ENCODE measurements at regions of chr7 and their contacts with region 1.

Region 1: GRCh38 chr7:55641273-55641691 is 69.0 kb upstream of the VOPP1 start:
- DNase-seq: peak; percentile 42
- ATAC-seq: peak; percentile 85
- H3K4me3 Mint-ChIP-seq: no peak overlapping the region
- H3K27ac Mint-ChIP-seq: no peak overlapping the region
- H3K4me1 Mint-ChIP-seq: peaks cover 9% of the 10 kb centered on the region
- H3K27me3 Mint-ChIP-seq: no peaks in the 10 kb centered on the region
- CTCF ChIP-seq: peak; percentile 79

Region 2: DNA sequence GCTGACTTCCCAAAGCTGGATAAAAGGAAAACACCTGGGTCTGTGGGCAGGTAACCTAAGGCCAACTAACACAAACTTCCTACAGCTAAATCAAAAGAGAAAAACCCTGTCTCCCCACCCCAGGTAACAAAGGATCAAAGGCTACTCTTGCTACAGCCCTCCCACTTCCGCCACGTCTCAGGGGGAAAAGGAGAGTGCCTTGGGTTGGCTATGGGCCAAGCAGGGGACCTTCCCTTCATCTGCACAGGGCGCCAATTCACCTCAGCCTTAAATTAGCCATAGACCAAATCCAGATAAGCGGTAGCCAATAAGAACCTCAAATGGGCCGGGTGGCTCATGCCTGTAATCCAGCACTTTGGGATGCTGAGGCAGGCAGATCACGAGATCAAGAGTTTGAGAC is 345.2 kb before region 1 on chr7:
- CTCF ChIA-PET with region 1: no interaction called
- POLR2A ChIA-PET with region 1: no interaction called
- intact Hi-C with region 1: no loop called
- DNase-seq: no peak
- ATAC-seq: no peak
- H3K4me3 Mint-ChIP-seq: no peak overlapping the region
- H3K27ac Mint-ChIP-seq: no peak overlapping the region
- H3K4me1 Mint-ChIP-seq: no peaks in the 10 kb centered on the region
- H3K27me3 Mint-ChIP-seq: peaks cover 11% of the 10 kb centered on the region
- CTCF ChIP-seq: no peak

Region 3: DNA sequence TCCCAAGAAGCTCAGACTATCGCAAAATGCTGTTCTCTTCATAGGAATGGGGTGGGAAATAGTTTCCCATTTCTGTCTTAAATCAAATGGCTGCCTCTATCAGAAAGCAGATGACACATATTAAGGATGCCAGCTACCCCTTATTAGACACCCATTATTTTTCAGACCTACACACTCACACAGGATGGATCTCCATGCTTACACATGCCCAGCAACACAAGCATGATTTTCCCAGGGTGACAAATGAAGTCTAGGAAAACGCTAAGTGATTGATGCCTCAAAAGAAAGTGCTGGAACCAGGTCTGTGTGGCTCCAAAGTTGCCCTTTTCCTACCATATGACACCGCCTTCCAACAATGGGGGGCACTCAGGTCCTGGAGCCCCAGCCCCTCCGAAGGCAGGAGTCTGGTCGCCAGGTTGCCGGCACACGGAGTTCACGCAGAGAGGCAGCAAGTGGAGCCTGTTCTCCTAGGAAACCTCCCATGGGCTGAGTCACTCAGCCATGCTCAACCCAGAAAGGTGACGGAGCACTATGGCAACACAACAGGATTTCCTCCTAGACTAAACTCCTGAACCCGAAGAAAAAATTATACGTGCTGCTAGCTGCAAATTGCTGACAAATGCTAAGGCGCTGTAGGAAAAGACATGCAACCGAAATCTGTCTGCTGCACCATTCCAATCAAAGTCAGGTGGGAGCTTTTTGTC is 88.8 kb before region 1 on chr7:
- CTCF ChIA-PET with region 1: no interaction called
- POLR2A ChIA-PET with region 1: no interaction called
- intact Hi-C with region 1: no loop called
- DNase-seq: no peak
- ATAC-seq: no peak
- H3K4me3 Mint-ChIP-seq: no peak overlapping the region
- H3K27ac Mint-ChIP-seq: no peak overlapping the region
- H3K4me1 Mint-ChIP-seq: peaks cover 91% of the 10 kb centered on the region
- H3K27me3 Mint-ChIP-seq: no peaks in the 10 kb centered on the region
- CTCF ChIP-seq: no peak

Region 4: GRCh38 chr7:55629051-55629677 is 12.1 kb before region 1 on chr7:
- CTCF ChIA-PET with region 1: interaction called, 20 read pairs
- POLR2A ChIA-PET with region 1: interaction called, 3 read pairs
- intact Hi-C with region 1: no loop called
- DNase-seq: no peak
- ATAC-seq: no peak
- H3K4me3 Mint-ChIP-seq: no peak overlapping the region
- H3K27ac Mint-ChIP-seq: no peak overlapping the region
- H3K4me1 Mint-ChIP-seq: no peaks in the 10 kb centered on the region
- H3K27me3 Mint-ChIP-seq: peaks cover 14% of the 10 kb centered on the region
- CTCF ChIP-seq: no peak

Region 5: GRCh38 chr7:55723621-55723941 is 82.3 kb after region 1 on chr7:
- CTCF ChIA-PET with region 1: interaction called, 13 read pairs
- POLR2A ChIA-PET with region 1: no interaction called
- intact Hi-C with region 1: no loop called
- DNase-seq: no peak
- ATAC-seq: no peak
- H3K4me3 Mint-ChIP-seq: no peak overlapping the region
- H3K27ac Mint-ChIP-seq: no peak overlapping the region
- H3K4me1 Mint-ChIP-seq: no peaks in the 10 kb centered on the region
- H3K27me3 Mint-ChIP-seq: no peaks in the 10 kb centered on the region
- CTCF ChIP-seq: no peak

Region 6: GRCh38 chr7:55928006-55928767 is 286.9 kb after region 1 on chr7:
- CTCF ChIA-PET with region 1: no interaction called
- POLR2A ChIA-PET with region 1: no interaction called
- intact Hi-C with region 1: no loop called
- DNase-seq: no peak
- ATAC-seq: no peak
- H3K4me3 Mint-ChIP-seq: no peak overlapping the region
- H3K27ac Mint-ChIP-seq: no peak overlapping the region
- H3K4me1 Mint-ChIP-seq: no peaks in the 10 kb centered on the region
- H3K27me3 Mint-ChIP-seq: no peaks in the 10 kb centered on the region
- CTCF ChIP-seq: no peak

Region 7: GRCh38 chr7:55964261-55965099 is 323.2 kb after region 1 on chr7 and contains the start of gene NIPSNAP2:
- CTCF ChIA-PET with region 1: interaction called, 6 read pairs
- POLR2A ChIA-PET with region 1: no interaction called
- intact Hi-C with region 1: loop called (anchors 5 kb)
- DNase-seq: peak; percentile 53
- ATAC-seq: peak; percentile 94
- H3K4me3 Mint-ChIP-seq: peak within 1 kb of the TSS; percentile 85
- H3K27ac Mint-ChIP-seq: peak within 1 kb of the TSS; percentile 88
- H3K4me1 Mint-ChIP-seq: peaks cover 34% of the 10 kb centered on the region
- H3K27me3 Mint-ChIP-seq: no peaks in the 10 kb centered on the region
- CTCF ChIP-seq: peak; percentile 22
- total RNA-seq, gene NIPSNAP2: 54.2 to 56.7 TPM